Right ventricle myocardium inferior (tissue), 1 donor: ENCODE measurements at regions of chr19 and their contacts with region 1.

Region 1: DNA sequence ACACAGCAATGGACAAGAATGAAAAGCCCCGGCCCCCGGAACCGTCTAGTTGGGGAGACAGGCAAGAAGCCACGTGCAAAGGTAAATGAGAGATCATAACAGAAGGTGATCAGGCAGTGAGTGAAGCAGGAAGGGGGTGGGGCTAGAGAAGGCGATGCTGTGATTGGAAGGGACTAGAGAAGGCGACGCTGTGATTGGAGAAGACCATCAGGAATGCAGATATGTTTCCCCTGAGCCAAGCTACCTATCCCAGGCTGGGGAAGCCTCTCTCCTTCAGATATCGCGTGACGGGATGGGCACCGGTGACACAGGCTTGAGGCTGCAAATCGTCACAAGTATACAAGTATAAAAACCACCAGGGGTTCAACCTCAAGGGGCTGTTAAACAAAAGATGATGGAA is 21.8 kb downstream of the DCAF15 start:
- DNase-seq: no peak
- ATAC-seq: no peak

Region 2: GRCh38 chr19:13959962-13960862 is 13.9 kb before region 1 on chr19:
- intact Hi-C with region 1: loop called (anchors 2 kb)
- DNase-seq: peak; percentile 60
- ATAC-seq: no peak